SK-N-SH (cell line): ENCODE measurements at regions of chr19 and their contacts with region 1.

Region 1: DNA sequence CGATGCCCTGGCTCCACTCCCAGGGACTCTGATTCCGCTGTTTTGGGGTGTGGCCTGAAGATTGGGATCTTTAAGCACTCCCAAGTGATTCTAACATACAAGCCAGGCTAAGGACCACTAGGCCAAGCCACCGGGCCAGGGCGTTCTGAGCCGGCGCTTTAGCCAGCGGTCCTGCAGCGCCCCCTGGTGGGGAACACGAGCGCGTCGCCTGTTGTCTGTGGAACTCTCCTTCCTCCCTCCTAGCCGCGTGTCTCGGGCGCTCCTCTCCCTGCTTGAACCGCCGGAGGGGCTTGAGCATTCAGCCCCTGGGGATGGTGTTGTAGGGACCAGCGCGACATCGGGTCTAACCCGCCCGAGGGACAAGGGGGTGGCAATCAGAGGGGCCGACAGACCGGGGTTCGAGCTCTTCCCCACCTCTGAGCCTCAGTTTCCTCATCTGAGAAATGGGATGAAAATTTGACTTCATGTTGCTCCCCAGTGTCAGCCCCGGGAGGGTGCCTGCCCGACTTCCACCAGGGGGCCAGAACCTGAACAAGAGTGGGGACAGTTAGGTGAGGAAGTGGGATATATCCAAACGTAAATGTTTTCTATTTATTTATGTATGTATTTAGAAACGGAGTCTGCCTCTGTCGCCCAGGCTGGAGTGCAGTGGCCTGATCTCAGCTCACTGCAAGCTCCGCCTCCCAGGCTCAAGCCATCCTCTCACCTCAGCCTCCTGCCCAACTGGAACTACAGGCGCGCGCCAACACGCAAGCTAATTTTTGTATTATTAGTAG is 18.0 kb upstream of the PNMA8B start:
- DNase-seq: peak; percentile 87
- H3K4me3 ChIP-seq: peak overlapping the region in 1 of 2 experiments; percentile 40; a peak in 1 of 4 replicates
- H3K27ac ChIP-seq: no peak overlapping the region
- H3K4me1 ChIP-seq: no peaks in the 10 kb centered on the region
- H3K27me3 ChIP-seq: no peaks in the 10 kb centered on the region; the same call in 1 of the 2 replicates
- CTCF ChIP-seq: peak; percentile 92
- EP300 ChIP-seq: no peak
- RAD21 ChIP-seq: peak; percentile 94

Region 2: DNA sequence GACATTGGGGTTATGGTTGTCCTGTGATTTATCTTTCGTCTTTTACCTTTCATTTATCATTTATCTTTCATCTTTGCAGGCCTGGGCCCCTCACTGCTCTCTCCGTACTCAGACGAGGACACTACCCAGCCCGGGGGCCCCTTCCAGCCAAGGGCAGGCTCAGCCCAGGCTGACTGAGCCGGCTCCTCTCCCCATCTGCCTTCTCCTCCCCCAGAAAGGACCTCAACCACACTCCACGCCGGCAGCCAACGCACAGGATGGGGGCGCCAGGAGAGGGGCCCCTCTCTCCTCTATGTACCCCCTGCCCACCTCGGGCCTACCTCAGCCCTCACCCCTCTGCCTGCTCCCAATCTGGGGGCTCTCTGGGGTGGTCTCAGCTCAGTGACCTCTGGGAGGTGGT is 174.2 kb before region 1 on chr19:
- CTCF ChIA-PET with region 1: no interaction called
- POLR2A ChIA-PET with region 1: no interaction called
- DNase-seq: peak; percentile 30
- H3K4me3 ChIP-seq: no peak overlapping the region
- H3K27ac ChIP-seq: no peak overlapping the region
- H3K4me1 ChIP-seq: no peaks in the 10 kb centered on the region
- H3K27me3 ChIP-seq: peaks cover 4% of the 10 kb centered on the region; the same call in 1 of the 2 replicates
- CTCF ChIP-seq: no peak
- EP300 ChIP-seq: no peak
- RAD21 ChIP-seq: no peak

Region 3: GRCh38 chr19:46404055-46404752 is 109.4 kb before region 1 on chr19:
- CTCF ChIA-PET with region 1: interaction called, 92 read pairs
- POLR2A ChIA-PET with region 1: no interaction called
- DNase-seq: no peak
- H3K4me3 ChIP-seq: no peak overlapping the region
- H3K27ac ChIP-seq: no peak overlapping the region
- H3K4me1 ChIP-seq: no peaks in the 10 kb centered on the region
- H3K27me3 ChIP-seq: no peaks in the 10 kb centered on the region
- CTCF ChIP-seq: no peak
- EP300 ChIP-seq: no peak
- RAD21 ChIP-seq: no peak

Region 4: GRCh38 chr19:46495787-46496101 is 17.9 kb before region 1 on chr19 and contains the start of gene PNMA8B:
- CTCF ChIA-PET with region 1: interaction called, 25 read pairs
- POLR2A ChIA-PET with region 1: no interaction called
- DNase-seq: peak; percentile 99
- H3K4me3 ChIP-seq: peak within 1 kb of the TSS; percentile 57 to 59
- H3K27ac ChIP-seq: peak within 1 kb of the TSS in 1 of 2 experiments; percentile 59; a peak in 1 of 4 replicates
- H3K4me1 ChIP-seq: peaks cover 0 to 16% of the 10 kb centered on the region in 2 experiments; a peak in 1 of 4 replicates
- H3K27me3 ChIP-seq: no peaks in the 10 kb centered on the region
- CTCF ChIP-seq: no peak
- EP300 ChIP-seq: no peak
- RAD21 ChIP-seq: no peak
- polyA plus RNA-seq, gene PNMA8B: 0.63 and 0.92 TPM in 2 replicates

Region 5: DNA sequence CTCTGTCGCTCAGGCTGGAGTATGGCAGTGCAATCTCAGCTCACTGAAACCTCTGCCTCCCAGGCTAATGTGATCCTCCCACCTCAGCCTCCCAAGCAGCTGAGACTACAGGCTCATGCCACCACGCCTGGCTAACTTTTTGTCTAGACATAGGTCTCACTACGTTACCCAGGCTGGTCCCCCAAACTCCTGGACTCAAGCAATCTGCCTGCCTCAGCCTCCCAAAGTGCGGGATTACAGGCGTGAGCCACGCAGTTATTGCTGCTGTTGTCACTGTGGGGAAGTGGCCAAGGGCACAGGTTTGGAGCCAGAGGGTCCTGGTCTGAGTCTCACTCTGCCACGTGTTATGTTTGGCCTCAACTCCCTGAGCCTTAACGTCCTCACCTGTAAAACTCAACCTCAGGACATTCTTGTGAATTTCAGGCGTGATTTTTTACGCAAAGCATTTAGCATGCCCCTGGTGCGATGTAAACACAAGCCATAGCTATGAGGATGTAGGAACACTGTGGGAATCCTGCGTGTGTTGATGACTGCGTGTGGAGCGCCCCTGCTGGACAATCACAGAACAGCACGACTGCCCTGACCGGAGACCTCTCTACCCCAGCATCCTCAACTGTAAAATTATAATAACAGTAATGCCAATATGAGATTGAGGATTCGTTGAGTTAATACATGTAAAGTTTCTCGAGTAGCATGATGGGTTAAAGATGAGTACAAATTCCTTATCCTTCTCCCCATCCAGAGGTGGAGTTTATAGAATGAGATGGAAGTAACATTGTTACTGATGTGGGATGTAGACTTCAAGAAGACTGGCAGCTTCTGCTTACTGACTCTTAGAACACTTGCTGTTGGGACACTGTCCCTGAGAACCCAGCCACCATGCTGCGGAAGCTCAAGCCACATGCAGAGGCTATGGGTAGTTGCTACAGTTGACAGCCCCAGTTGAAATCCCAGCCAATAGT is 23.8 kb after region 1 on chr19:
- CTCF ChIA-PET with region 1: interaction called, 59 read pairs
- POLR2A ChIA-PET with region 1: no interaction called
- DNase-seq: peak; percentile 70
- H3K4me3 ChIP-seq: peak overlapping the region in 1 of 2 experiments; percentile 11; a peak in 1 of 4 replicates
- H3K27ac ChIP-seq: no peak overlapping the region
- H3K4me1 ChIP-seq: peaks cover 0 to 9% of the 10 kb centered on the region in 2 experiments; a peak in 1 of 4 replicates
- H3K27me3 ChIP-seq: no peaks in the 10 kb centered on the region
- CTCF ChIP-seq: peak; percentile 89
- EP300 ChIP-seq: no peak
- RAD21 ChIP-seq: 0 out of 2 replicates have a peak, but pooled peaks have one; percentile 9

Region 6: DNA sequence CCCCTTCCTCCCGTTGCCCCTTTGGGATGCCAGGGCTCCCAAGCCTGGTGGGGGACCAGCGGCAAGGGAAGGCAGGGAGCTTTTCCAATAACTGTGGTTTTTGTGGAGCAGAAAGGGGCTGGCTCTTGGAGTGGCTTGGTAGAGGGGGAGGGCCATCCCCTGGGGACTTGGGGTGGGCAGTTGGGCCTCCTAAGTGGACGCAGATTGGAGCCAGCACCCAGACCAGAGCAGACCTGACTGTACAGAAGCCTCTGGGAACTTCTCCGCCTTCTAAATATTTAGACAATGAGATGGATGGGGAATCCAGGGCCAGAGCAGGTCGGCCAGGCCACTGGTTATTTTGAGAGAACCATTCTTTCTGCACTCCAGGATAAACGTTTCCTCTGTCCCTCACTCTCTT is 107.1 kb after region 1 on chr19:
- CTCF ChIA-PET with region 1: no interaction called
- POLR2A ChIA-PET with region 1: no interaction called
- DNase-seq: peak; percentile 82
- H3K4me3 ChIP-seq: peak overlapping the region in 1 of 2 experiments; percentile 52; a peak in 2 of 4 replicates
- H3K27ac ChIP-seq: peak overlapping the region in 1 of 2 experiments; percentile 97; a peak in 2 of 4 replicates
- H3K4me1 ChIP-seq: peaks cover 15 to 67% of the 10 kb centered on the region in 2 experiments
- H3K27me3 ChIP-seq: no peaks in the 10 kb centered on the region
- CTCF ChIP-seq: no peak
- EP300 ChIP-seq: no peak; a peak in 1 of 4 replicates
- RAD21 ChIP-seq: no peak

Region 7: DNA sequence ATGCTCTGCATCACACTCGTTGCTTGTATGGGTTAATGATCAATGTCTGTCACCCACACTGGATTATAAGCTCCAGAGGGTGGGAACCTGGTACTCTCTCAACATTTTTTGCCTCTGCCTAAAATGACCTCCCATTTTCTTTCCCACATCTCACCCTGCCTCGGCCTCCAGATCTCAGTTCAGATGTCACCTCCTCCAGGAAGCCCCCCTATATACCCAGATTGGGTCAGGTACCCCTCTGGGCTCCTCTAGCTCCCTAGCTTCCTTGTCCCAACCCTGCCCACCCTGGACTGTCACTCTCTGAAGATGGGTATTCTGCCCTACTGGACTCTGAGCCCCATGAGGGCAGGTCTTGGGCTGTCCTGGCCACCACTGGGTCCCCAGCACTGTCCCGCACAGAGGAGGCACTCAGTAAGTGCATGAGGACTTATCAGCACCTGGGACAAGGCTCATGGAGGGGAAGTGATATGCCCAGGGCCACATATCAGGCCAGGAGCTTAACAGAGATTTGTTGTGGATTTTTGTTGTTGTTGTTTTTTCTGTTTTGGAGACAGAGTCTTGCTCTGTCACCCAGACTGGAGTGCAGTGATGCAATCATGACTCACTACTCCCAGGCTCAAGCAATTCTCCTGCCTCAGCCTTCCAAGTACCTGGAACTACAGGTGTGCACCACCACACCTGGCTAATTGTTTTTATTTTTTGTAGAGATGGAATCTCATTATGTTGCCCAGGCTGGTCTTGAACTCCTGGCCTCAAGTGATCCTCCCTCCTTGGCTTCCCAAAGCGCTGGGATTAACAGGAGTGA is 179.5 kb after region 1 on chr19:
- CTCF ChIA-PET with region 1: no interaction called
- POLR2A ChIA-PET with region 1: no interaction called
- DNase-seq: peak; percentile 13
- H3K4me3 ChIP-seq: no peak overlapping the region
- H3K27ac ChIP-seq: no peak overlapping the region
- H3K4me1 ChIP-seq: no peaks in the 10 kb centered on the region
- H3K27me3 ChIP-seq: no peaks in the 10 kb centered on the region
- CTCF ChIP-seq: no peak
- EP300 ChIP-seq: no peak
- RAD21 ChIP-seq: no peak